Activated CD8-positive, alpha-beta memory T cell treated with anti-CD3 and anti-CD28 coated beads, Interleukin-2, amount 10 ng/mL, durations not matched to agents 7 days and 5 days (primary cell): ENCODE measurements at regions of chr7 and their contacts with region 1.

Region 1: GRCh38 chr7:135147899-135148721 is at the start of gene TMEM140:
- DNase-seq: peak; percentile 80
- ATAC-seq: peak; percentile 88
- H3K4me3 Mint-ChIP-seq: peak within 1 kb of the TSS; percentile 95
- H3K27ac Mint-ChIP-seq: peak within 1 kb of the TSS; percentile 96
- H3K4me1 Mint-ChIP-seq: peaks cover 50% of the 10 kb centered on the region
- H3K27me3 Mint-ChIP-seq: no peaks in the 10 kb centered on the region
- total RNA-seq, gene TMEM140: 19.9 to 27.5 TPM

Region 2: DNA sequence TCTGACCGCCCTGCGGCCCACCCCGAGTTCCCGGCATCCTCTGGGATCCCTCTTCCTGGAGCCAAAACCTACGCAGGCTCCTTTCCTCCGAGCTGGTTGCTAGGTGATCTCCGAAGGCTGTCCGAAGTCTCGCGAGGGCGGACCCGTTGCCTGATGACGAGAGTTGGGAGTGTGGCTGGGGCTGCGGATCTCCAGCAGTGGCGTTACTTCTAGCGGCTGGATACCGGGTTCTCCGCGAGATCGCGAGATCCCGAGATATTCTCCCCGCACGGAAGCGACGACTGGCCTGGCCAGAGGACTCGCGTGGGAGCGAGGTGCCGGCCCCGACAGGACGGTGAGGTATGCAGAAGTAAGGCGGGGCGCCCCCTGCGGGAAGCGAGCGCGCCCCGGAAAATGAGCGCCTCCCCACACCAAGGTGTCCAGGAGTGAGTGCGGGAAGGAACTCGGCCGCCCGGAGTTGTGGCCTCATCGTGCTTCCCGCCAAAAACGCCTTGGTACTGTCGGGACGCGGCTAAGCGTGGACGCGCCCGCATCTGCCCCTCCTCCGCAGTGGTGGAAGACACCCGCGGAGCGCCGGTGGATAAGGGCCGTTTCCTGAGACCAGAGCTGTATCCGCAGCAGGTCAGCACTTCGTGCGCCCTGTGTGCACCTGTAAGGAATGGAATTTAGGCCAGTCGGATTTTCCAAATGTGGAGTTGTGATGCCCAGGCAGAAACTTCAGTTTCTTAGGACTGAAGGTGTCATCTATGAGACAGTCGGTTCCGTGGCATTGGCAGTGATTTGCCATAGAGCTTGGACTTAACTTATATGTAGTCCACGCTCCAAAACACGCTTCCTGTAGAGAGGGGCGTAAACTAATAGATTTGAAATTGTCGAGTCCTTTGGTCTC is 161.5 kb before region 1 on chr7 and contains the start of gene AGBL3:
- CTCF ChIA-PET with region 1: interaction called, 26 read pairs
- DNase-seq: peak; percentile 96
- ATAC-seq: peak; percentile 96
- H3K4me3 Mint-ChIP-seq: peak within 1 kb of the TSS; percentile 97
- H3K27ac Mint-ChIP-seq: peak within 1 kb of the TSS; percentile 93
- H3K4me1 Mint-ChIP-seq: peaks cover 34% of the 10 kb centered on the region
- H3K27me3 Mint-ChIP-seq: no peaks in the 10 kb centered on the region
- total RNA-seq, gene AGBL3: 2.4 to 2.8 TPM

Region 3: GRCh38 chr7:135012229-135012628 is 135.9 kb before region 1 on chr7:
- CTCF ChIA-PET with region 1: no interaction called
- DNase-seq: no peak
- ATAC-seq: no peak
- H3K4me3 Mint-ChIP-seq: no peak overlapping the region
- H3K27ac Mint-ChIP-seq: no peak overlapping the region
- H3K4me1 Mint-ChIP-seq: no peaks in the 10 kb centered on the region
- H3K27me3 Mint-ChIP-seq: no peaks in the 10 kb centered on the region

Region 4: DNA sequence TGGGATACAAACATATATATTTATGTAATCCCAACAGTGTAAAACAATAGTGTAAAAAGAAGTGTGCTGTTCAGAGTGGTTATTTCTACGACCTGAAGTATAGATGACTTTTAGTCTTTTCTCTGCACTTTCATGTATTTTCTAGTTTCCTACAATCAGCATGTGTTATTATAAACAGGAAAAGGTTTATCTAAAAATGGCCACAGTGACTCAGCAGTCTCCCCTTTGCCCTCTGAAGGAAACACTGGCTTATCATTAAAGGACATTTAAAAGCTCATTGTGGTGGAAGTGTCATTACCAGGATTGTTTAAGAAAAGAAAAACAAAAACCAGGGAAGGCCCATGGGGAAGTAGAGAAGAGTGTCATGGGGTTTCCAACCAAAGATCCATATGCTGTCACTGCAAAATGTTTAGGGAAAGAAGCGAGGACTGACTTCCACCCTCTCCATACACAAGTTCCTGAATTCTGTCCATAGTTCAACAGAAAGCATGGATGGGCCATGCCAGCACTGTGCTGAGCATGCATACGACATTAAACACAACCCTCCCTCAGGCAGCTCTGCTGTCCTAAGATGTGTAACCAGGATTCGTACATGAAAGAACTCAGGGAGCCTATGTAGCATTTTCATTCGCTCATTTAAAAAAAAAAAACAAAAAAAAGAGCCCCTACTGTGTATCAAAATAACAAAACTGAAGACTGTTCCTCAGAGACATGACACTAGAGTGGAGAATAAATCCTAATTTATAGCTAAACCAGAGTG is 12.2 kb after region 1 on chr7:
- CTCF ChIA-PET with region 1: interaction called, 16 read pairs
- DNase-seq: no peak
- ATAC-seq: peak; percentile 60
- H3K4me3 Mint-ChIP-seq: peak overlapping the region; percentile 33
- H3K27ac Mint-ChIP-seq: peak overlapping the region; percentile 88
- H3K4me1 Mint-ChIP-seq: peaks cover 31% of the 10 kb centered on the region
- H3K27me3 Mint-ChIP-seq: no peaks in the 10 kb centered on the region

Region 5: GRCh38 chr7:135170274-135170997 is 22.3 kb after region 1 on chr7 and contains the start of gene CYREN:
- CTCF ChIA-PET with region 1: interaction called, 39 read pairs
- DNase-seq: peak; percentile 94
- ATAC-seq: peak; percentile 85
- H3K4me3 Mint-ChIP-seq: peak within 1 kb of the TSS; percentile 90
- H3K27ac Mint-ChIP-seq: peak within 1 kb of the TSS; percentile 92
- H3K4me1 Mint-ChIP-seq: peaks cover 43% of the 10 kb centered on the region
- H3K27me3 Mint-ChIP-seq: no peaks in the 10 kb centered on the region
- total RNA-seq, gene CYREN: 33.2 to 46.0 TPM

Region 6: GRCh38 chr7:135253898-135254771 is 106.0 kb after region 1 on chr7:
- CTCF ChIA-PET with region 1: no interaction called
- DNase-seq: no peak
- ATAC-seq: peak; percentile 39
- H3K4me3 Mint-ChIP-seq: no peak overlapping the region
- H3K27ac Mint-ChIP-seq: no peak overlapping the region
- H3K4me1 Mint-ChIP-seq: no peaks in the 10 kb centered on the region
- H3K27me3 Mint-ChIP-seq: peaks cover 3% of the 10 kb centered on the region